Ascending aorta (tissue), 2 donors: ENCODE measurements at regions of chr12 and their contacts with region 1.

Region 1: DNA sequence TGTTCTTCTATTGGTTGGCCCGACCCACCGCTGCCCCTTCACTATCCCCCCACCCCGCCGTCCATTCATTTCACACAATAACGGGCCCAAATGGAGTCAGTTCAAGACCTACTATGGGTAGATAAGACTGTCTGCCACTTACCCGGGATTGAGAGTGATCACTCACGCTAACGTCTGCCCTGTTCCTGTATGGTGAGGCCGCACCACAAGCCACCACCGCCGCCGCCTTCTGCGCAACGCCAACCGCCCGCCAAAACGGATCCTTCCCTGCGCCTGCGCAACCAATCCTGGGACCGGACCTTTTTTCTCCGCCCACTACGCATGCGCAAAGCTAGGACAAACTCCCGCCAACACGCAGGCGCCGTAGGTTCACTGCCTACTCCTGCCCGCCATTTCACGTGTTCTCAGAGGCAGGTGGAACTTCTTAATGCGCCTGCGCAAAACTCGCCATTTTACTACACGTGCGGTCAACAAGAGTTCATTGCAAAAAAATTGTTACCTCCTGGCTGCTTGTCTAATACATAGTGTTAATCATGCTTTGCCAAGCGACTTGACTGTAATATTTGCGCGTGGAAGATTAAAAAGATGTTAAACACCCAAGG is at the start of gene CBX5:
- DNase-seq: peak; percentile 95 to 99
- H3K4me3 ChIP-seq: peak within 1 kb of the TSS; percentile 68 to 77
- H3K27ac ChIP-seq: peak within 1 kb of the TSS; percentile 88 to 94
- H3K4me1 ChIP-seq: peaks cover 7 to 44% of the 10 kb centered on the region in 2 donors
- H3K27me3 ChIP-seq: no peaks in the 10 kb centered on the region
- CTCF ChIP-seq: no peak
- total RNA-seq, gene CBX5: 19.4 TPM

Region 2: GRCh38 chr12:54017878-54018467 is 262.0 kb before region 1 on chr12:
- intact Hi-C with region 1: loop called (anchors 5 kb)
- DNase-seq: peak in 1 of 2 donors; percentile 95
- H3K4me3 ChIP-seq: peak overlapping the region; percentile 47 to 71
- H3K27ac ChIP-seq: peak overlapping the region; percentile 94 to 96
- H3K4me1 ChIP-seq: peaks cover 0 to 10% of the 10 kb centered on the region in 2 donors
- H3K27me3 ChIP-seq: no peaks in the 10 kb centered on the region
- CTCF ChIP-seq: no peak

Region 3: GRCh38 chr12:54229624-54230212 is 50.2 kb before region 1 on chr12:
- intact Hi-C with region 1: loop called (anchors 5 kb)
- DNase-seq: peak; percentile 14 to 76
- H3K4me3 ChIP-seq: no peak overlapping the region
- H3K27ac ChIP-seq: peak overlapping the region; percentile 22 to 49
- H3K4me1 ChIP-seq: peaks cover 0 to 7% of the 10 kb centered on the region in 2 donors
- H3K27me3 ChIP-seq: no peaks in the 10 kb centered on the region
- CTCF ChIP-seq: no peak

Region 4: GRCh38 chr12:54324617-54325441 is 44.9 kb after region 1 on chr12 and contains the start of gene COPZ1:
- intact Hi-C with region 1: loop called (anchors 1 kb)
- DNase-seq: peak; percentile 97 to 99
- H3K4me3 ChIP-seq: peak within 1 kb of the TSS; percentile 64 to 65
- H3K27ac ChIP-seq: peak within 1 kb of the TSS; percentile 64 to 78
- H3K4me1 ChIP-seq: peaks cover 6 to 26% of the 10 kb centered on the region in 2 donors
- H3K27me3 ChIP-seq: no peaks in the 10 kb centered on the region
- CTCF ChIP-seq: peak; percentile 61 to 72 (median 67)
- total RNA-seq, gene COPZ1: 60.3 TPM